Activated CD4-positive, alpha-beta memory T cell treated with anti-CD3 and anti-CD28 coated beads for 36 hours (primary cell): ENCODE measurements at regions of chr6 and their contacts with region 1.

Region 1: GRCh38 chr6:127938701-127939100 is 37.8 kb upstream of the THEMIS start:
- DNase-seq: no peak
- H3K4me3 Mint-ChIP-seq: no peak overlapping the region
- H3K27ac Mint-ChIP-seq: peak overlapping the region; percentile 62
- H3K4me1 Mint-ChIP-seq: peaks cover 41% of the 10 kb centered on the region
- H3K27me3 Mint-ChIP-seq: no peaks in the 10 kb centered on the region

Region 2: GRCh38 chr6:127918506-127919427 is 19.9 kb before region 1 on chr6:
- CTCF ChIA-PET with region 1: interaction called, 4 read pairs
- POLR2A ChIA-PET with region 1: interaction called, 3 read pairs
- intact Hi-C with region 1: loop called (anchors 1 kb)
- DNase-seq: no peak
- H3K4me3 Mint-ChIP-seq: peak overlapping the region; percentile 49
- H3K27ac Mint-ChIP-seq: peak overlapping the region; percentile 44
- H3K4me1 Mint-ChIP-seq: peaks cover 85% of the 10 kb centered on the region
- H3K27me3 Mint-ChIP-seq: no peaks in the 10 kb centered on the region

Region 3: DNA sequence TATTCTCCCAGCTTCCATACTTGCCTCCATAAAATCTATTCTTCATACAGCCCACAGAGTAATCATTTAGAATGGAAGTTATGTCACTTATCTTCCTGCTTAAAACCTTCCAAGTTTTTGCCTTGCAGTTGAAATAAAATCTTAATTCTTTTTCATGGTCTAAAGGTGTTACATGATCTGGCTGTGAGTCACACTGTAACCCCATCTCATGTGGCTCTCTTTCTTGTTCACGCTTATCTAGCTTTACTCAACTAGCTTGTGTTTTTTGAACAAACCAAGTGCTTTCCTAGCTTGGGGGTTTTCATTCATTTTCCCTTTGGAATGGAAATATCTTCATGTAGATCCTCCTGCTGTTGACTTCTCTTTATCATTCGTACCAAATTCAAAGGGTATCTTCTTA is 14.3 kb before region 1 on chr6:
- CTCF ChIA-PET with region 1: interaction called, 4 read pairs
- POLR2A ChIA-PET with region 1: interaction called, 3 read pairs
- intact Hi-C with region 1: loop called (anchors 1 kb)
- DNase-seq: no peak
- H3K4me3 Mint-ChIP-seq: no peak overlapping the region
- H3K27ac Mint-ChIP-seq: peak overlapping the region; percentile 9
- H3K4me1 Mint-ChIP-seq: peaks cover 56% of the 10 kb centered on the region
- H3K27me3 Mint-ChIP-seq: no peaks in the 10 kb centered on the region

Region 4: DNA sequence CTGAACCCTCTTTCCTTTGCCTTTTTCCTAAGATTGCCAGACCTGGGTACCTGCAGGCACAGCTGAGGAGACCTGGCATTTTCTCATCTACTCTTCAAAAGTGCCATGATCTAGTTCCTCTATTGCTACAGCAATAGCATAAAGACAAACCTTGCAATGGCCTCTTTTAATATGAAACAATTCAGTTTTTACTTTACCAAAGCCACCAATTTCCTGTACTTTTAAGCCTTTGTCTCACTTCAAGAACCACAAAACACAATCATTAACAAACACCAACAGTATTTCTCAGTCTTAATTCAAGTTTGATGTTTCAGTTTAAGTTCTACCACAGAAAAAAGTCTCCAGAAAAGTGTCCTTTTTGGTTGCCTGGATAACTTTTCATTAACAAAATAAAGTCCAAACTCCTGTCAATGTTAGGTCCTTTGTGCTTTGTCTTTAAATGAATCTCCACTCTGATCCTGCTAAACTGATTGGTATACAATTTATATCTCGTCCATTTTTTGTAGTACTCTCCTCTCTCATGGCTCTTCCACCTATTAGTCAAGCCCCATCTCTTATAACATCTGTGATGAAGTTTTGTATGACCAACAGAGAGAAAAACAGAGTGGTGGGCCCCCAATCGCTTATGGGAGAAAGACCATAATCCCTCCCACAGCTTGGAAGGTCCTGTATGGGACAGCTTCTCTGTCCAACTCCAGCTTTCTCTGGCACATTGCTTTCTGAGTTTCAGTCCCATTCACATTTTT is 12.6 kb after region 1 on chr6:
- CTCF ChIA-PET with region 1: interaction called, 3 read pairs
- POLR2A ChIA-PET with region 1: interaction called, 3 read pairs
- intact Hi-C with region 1: loop called (anchors 1 kb)
- DNase-seq: no peak
- H3K4me3 Mint-ChIP-seq: peak overlapping the region; percentile 43
- H3K27ac Mint-ChIP-seq: peak overlapping the region; percentile 55
- H3K4me1 Mint-ChIP-seq: peaks cover 48% of the 10 kb centered on the region
- H3K27me3 Mint-ChIP-seq: no peaks in the 10 kb centered on the region